Activated T-helper 2 cell treated with anti-CD3 and anti-CD28 coated beads, Interferon-gamma antibody, Interleukin-2, Interleukin-4, amounts not matched to agents 10 μg/mL and 5 μg/mL and 100 μg/mL, durations not matched to agents 14 hours and 24 hours and 36 hours (primary cell): ENCODE measurements at regions of chr1 and their contacts with region 1.

Region 1: DNA sequence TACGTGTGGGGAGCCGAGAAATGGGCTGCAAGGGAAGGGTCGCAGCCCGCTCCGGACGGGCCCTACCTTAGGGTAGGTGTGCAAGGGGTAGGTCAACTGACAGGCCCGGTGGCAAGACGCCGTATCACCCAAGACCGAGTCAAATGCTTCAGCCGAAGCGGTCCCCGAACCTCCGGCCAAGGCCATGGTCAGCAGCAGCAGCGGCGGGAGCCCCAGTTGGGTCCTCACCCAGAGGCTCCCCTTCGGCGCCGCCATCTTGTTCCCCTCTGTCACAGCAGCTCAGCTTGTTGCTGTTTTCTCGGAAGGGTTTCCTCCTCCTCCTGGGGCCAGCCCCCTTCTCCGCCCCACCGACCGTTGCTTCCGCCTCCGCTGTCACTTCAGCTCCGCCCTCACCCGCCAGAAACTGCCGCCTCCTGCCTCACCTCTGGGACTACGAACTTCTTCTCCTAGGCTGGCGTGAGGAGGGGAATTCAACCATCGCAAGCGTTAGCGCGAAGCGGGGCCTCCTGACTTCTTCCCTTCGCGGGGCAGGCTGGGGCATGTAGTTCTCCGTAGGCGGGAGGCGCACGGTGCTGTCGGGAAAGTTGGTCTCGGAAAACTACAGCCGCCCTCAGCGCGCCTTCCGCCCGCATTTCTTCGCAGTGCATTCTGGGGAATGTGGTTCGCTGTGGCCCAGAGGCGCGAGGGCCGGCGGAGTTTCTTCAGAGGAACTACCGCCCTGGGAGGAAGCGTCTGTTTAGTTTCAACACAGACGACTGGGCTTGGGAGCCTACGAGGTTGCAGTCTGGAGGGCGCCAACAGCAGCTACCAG is at the starts of genes TCEANC2 and TMEM59:
- DNase-seq: peak; percentile 98
- H3K4me3 Mint-ChIP-seq: no peak within 1 kb of the TSS
- H3K27ac Mint-ChIP-seq: no peak within 1 kb of the TSS
- H3K4me1 Mint-ChIP-seq: peaks cover 18% of the 10 kb centered on the region
- H3K27me3 Mint-ChIP-seq: no peaks in the 10 kb centered on the region
- total RNA-seq, gene TCEANC2: 12.8 and 13.2 TPM in 2 replicates
- total RNA-seq, gene TMEM59: 128 and 133 TPM in 2 replicates

Region 2: DNA sequence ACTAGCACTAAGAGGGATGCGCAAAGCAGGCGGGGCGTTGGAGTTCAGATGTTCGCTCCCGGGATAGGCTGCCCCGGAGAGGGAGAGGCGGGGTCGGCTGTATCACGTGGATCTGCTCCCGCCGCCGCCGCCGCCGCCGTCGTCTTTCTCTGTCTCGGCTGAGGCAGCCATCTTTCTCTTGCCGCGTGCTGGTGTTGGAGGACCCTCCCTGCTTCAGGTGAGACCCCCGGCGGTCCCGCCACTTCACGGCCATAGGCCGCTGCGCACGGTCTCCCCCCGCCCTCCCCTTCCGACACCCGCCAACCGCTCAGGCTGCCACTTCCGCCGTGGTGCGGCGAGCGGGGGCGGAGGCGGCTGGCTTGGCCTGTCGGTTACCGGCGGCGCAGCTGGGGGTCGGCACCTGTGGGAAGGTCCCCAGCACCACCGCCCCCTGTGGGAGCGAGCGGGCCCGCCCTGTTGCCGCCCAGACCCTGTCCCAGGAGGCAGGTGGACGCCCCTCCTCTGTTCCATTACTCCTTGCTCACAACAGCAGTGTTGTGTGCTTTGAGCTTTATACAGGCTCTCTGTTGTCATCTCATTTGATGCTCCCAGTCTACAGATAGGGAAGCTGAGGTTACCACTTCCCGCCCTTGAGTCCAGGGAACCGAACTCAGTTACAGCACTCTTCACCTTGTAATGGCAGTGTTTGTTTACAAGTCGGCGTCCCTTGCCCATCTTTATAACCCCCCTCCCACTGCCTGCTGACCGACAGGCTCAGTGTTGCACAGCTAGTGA is 1996.8 kb before region 1 on chr1 and contains the start of gene BTF3L4:
- intact Hi-C with region 1: loop called (anchors 5 kb)
- DNase-seq: peak; percentile 93
- H3K4me3 Mint-ChIP-seq: peak within 1 kb of the TSS; percentile 100
- H3K27ac Mint-ChIP-seq: peak within 1 kb of the TSS; percentile 100
- H3K4me1 Mint-ChIP-seq: peaks cover 41% of the 10 kb centered on the region
- H3K27me3 Mint-ChIP-seq: no peaks in the 10 kb centered on the region
- total RNA-seq, gene BTF3L4: 40.8 and 43.1 TPM in 2 replicates

Region 3: DNA sequence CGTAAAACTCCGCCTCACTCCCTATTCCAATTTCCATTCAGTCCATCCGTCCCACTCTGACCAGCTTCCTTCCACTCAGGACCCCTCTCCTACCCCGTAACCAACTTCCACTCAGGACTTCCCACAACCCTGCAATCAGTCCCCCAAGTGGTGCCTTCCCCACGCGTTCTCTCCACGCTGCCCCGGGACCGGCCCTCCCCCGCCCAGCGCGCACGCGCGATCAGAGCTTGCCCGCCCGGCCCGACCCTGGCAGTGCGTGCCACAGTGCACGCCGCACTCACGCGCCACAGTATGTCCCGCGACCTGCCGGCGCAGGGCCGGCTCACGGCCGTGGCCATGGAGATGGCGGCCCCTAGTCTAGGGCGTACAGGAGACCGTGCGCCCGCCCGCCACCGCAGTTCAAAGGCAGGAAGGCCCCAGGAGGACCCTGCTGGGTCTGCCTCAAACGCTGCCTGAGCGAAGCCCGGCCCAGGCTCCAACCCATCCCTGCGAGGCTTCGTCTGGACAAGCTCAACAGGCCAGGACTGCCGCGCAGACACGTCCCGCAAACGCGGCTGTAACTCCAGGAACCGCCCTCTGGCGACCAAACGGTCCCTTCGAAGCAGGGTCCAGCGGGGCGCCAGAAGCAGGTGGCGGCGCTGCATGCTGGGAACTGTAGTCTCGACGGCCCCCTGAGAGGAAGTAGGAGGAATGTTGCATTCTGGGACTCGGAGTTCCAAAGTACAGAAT is 215.1 kb before region 1 on chr1 and contains the start of gene NDC1:
- intact Hi-C with region 1: loop called (anchors 1 kb)
- DNase-seq: peak; percentile 87
- H3K4me3 Mint-ChIP-seq: peak within 1 kb of the TSS; percentile 98
- H3K27ac Mint-ChIP-seq: peak within 1 kb of the TSS; percentile 94
- H3K4me1 Mint-ChIP-seq: peaks cover 22% of the 10 kb centered on the region
- H3K27me3 Mint-ChIP-seq: no peaks in the 10 kb centered on the region
- total RNA-seq, gene NDC1: 32.4 and 33.9 TPM in 2 replicates

Region 4: GRCh38 chr1:53945433-53946251 is 107.5 kb before region 1 on chr1 and contains the start of gene IFT25:
- intact Hi-C with region 1: loop called (anchors 1 kb)
- DNase-seq: peak; percentile 96
- H3K4me3 Mint-ChIP-seq: peak within 1 kb of the TSS; percentile 92
- H3K27ac Mint-ChIP-seq: peak within 1 kb of the TSS; percentile 87
- H3K4me1 Mint-ChIP-seq: peaks cover 46% of the 10 kb centered on the region
- H3K27me3 Mint-ChIP-seq: no peaks in the 10 kb centered on the region
- total RNA-seq, gene IFT25: 52.9 and 54.3 TPM in 2 replicates

Region 5: GRCh38 chr1:54229281-54229891 is 176.2 kb after region 1 on chr1:
- intact Hi-C with region 1: loop called (anchors 5 kb)
- DNase-seq: peak; percentile 23
- H3K4me3 Mint-ChIP-seq: peak overlapping the region; percentile 64
- H3K27ac Mint-ChIP-seq: peak overlapping the region; percentile 66
- H3K4me1 Mint-ChIP-seq: peaks cover 29% of the 10 kb centered on the region
- H3K27me3 Mint-ChIP-seq: no peaks in the 10 kb centered on the region

Region 6: GRCh38 chr1:54406339-54407153 is 353.4 kb after region 1 on chr1 and contains the start of gene SSBP3:
- intact Hi-C with region 1: loop called (anchors 1 kb)
- DNase-seq: peak; percentile 91
- H3K4me3 Mint-ChIP-seq: peak within 1 kb of the TSS; percentile 90
- H3K27ac Mint-ChIP-seq: peak within 1 kb of the TSS; percentile 94
- H3K4me1 Mint-ChIP-seq: peaks cover 58% of the 10 kb centered on the region
- H3K27me3 Mint-ChIP-seq: no peaks in the 10 kb centered on the region
- total RNA-seq, gene SSBP3: 84.4 and 89.9 TPM in 2 replicates

Region 7: DNA sequence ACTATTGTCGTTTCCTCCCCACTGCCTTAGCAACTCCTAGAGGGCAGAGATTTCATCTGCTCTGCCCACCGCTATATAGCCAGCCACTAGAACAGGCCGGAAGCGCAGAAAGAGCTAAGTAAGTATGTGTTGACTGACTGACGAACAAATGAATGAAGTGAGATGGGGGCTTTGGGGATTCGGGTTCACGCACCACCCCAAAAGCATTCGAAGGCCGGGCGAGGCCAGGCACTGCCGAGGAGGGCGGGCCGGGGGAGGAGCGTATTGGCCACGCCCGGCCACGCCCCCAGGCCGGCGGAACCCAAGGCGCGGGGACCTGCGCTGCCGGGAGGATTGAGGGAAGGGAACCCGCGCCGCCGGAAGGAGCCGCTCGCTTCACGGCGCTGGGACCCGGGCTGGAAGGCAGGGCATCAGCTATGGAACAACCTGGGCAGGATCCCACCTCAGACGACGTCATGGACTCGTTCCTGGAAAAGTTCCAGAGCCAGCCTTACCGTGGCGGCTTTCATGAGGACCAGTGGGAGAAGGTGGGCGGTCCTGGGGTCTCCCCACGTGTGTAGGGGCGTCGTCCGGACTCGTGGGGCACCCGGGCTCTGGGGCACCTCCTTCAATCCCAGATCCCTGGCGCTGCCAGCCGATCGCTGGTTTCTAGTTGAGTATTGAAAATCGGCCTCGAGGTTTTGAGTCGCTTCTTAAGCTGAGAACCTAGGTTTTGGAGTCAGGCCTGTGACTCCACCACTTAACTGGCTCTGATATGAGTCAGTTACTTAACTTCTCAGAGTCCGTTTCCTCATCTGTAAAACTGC is 662.6 kb after region 1 on chr1 and contains the start of gene TTC4:
- intact Hi-C with region 1: loop called (anchors 1 kb)
- DNase-seq: peak; percentile 81
- H3K4me3 Mint-ChIP-seq: peak within 1 kb of the TSS; percentile 88
- H3K27ac Mint-ChIP-seq: peak within 1 kb of the TSS; percentile 88
- H3K4me1 Mint-ChIP-seq: peaks cover 29% of the 10 kb centered on the region
- H3K27me3 Mint-ChIP-seq: no peaks in the 10 kb centered on the region
- total RNA-seq, gene TTC4: 36.6 and 38.2 TPM in 2 replicates